ENCODE measurements at regions of chr2 and their contacts with region 1.

Region 1: GRCh38 chr2:36492216-36492945 is 105.6 kb downstream of the FEZ2 start:
- DNase-seq: no peak
- H3K4me3 ChIP-seq: no peak overlapping the region
- H3K27ac ChIP-seq: no peak overlapping the region
- H3K4me1 ChIP-seq: no peaks in the 10 kb centered on the region
- H3K27me3 ChIP-seq: no peaks in the 10 kb centered on the region
- CTCF ChIP-seq: no peak
- POLR2A ChIP-seq: no peak

Region 2: DNA sequence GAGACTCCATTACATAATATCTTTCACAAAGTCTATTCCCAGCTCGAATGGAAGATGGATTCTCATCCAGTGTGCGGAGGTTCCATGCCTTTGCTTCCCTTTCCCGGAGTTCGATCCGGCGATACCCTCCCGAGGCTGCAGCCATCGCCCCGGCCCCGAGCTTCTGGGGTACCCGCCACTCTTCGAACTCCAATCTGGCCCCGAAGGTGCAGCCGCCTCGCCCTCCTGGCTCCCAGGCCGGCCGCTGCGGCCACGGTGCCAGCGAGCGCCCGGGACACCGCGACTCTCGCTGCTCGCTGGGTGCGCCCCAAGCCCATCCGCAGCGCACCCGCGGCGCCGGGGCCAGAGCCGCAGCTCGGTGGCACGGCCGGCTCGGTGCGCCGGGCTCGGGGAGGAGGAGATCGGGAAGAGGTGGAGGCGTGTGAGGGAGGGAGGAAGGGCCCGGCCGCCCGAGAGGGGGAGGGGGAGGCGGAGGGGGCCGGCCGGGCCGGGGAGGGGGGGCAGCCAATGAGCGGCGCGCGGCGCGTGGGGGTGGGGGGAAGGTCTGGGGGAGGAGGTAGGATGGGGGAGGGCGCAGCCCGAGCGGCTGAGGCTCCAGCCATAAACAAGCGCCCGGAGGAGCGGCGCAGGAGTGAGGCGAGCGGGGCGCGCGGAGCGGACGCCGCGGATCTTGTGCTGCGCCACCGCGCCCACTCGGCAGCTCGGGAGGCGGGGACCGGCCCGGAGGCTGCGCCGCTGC is 137.1 kb before region 1 on chr2 and contains the start of gene CRIM1:
- intact Hi-C with region 1: loop called (anchors 10 kb)
- DNase-seq: peak; percentile 83 to 86
- H3K4me3 ChIP-seq: peak within 1 kb of the TSS; percentile 81 to 98 (median 93)
- H3K27ac ChIP-seq: peak within 1 kb of the TSS; percentile 93 to 98
- H3K4me1 ChIP-seq: peaks cover under 1 to 8% of the 10 kb centered on the region in 2 donors
- H3K27me3 ChIP-seq: no peaks in the 10 kb centered on the region
- CTCF ChIP-seq: no peak
- POLR2A ChIP-seq: no peak
- total RNA-seq, gene CRIM1: 166 to 187 (median 178) TPM

Measured in breast epithelium (tissue), 4 donors.